Naive thymus-derived CD4-positive, alpha-beta T cell (primary cell): ENCODE measurements at regions of chr1 and their contacts with region 1.

Region 1: GRCh38 chr1:97820470-97821188 is 100.2 kb downstream of the DPYD start:
- DNase-seq: peak in 1 of 9 donors; percentile 7
- ATAC-seq: peak; percentile 32
- H3K4me3 ChIP-seq: no peak overlapping the region
- H3K4me3 Mint-ChIP-seq: no peak overlapping the region
- H3K27ac ChIP-seq: no peak overlapping the region
- H3K27ac Mint-ChIP-seq: no peak overlapping the region
- H3K4me1 ChIP-seq: no peaks in the 10 kb centered on the region
- H3K4me1 Mint-ChIP-seq: peaks cover 0 to 9% (median 1%) of the 10 kb centered on the region in 7 donors
- H3K27me3 ChIP-seq: no peaks in the 10 kb centered on the region
- H3K27me3 Mint-ChIP-seq: no peaks in the 10 kb centered on the region

Region 2: GRCh38 chr1:96966536-96967138 is 854.0 kb before region 1 on chr1:
- CTCF ChIA-PET with region 1: no interaction called
- POLR2A ChIA-PET with region 1: no interaction called
- intact Hi-C with region 1: loop called (anchors 1 to 10 kb)
- DNase-seq: peak; percentile 30 to 71 (median 60)
- ATAC-seq: peak; percentile 82
- H3K4me3 ChIP-seq: no peak overlapping the region
- H3K4me3 Mint-ChIP-seq: no peak overlapping the region
- H3K27ac ChIP-seq: no peak overlapping the region
- H3K27ac Mint-ChIP-seq: no peak overlapping the region
- H3K4me1 ChIP-seq: no peaks in the 10 kb centered on the region
- H3K4me1 Mint-ChIP-seq: no peaks in the 10 kb centered on the region
- H3K27me3 ChIP-seq: no peaks in the 10 kb centered on the region
- H3K27me3 Mint-ChIP-seq: peaks cover 7 to 55% (median 28%) of the 10 kb centered on the region in 5 donors

Region 3: GRCh38 chr1:97084546-97084945 is 736.1 kb before region 1 on chr1:
- CTCF ChIA-PET with region 1: no interaction called
- POLR2A ChIA-PET with region 1: no interaction called
- intact Hi-C with region 1: no loop called
- DNase-seq: no peak
- ATAC-seq: no peak
- H3K4me3 ChIP-seq: no peak overlapping the region
- H3K4me3 Mint-ChIP-seq: no peak overlapping the region
- H3K27ac ChIP-seq: no peak overlapping the region
- H3K27ac Mint-ChIP-seq: no peak overlapping the region
- H3K4me1 ChIP-seq: no peaks in the 10 kb centered on the region
- H3K4me1 Mint-ChIP-seq: no peaks in the 10 kb centered on the region
- H3K27me3 ChIP-seq: no peaks in the 10 kb centered on the region
- H3K27me3 Mint-ChIP-seq: no peaks in the 10 kb centered on the region

Region 4: GRCh38 chr1:97186404-97186803 is 634.2 kb before region 1 on chr1:
- CTCF ChIA-PET with region 1: no interaction called
- POLR2A ChIA-PET with region 1: no interaction called
- intact Hi-C with region 1: loop called in 1 of 2 experiments (anchors 5 kb)
- DNase-seq: peak in 2 of 9 donors; percentile 1 to 2
- ATAC-seq: no peak
- H3K4me3 ChIP-seq: no peak overlapping the region
- H3K4me3 Mint-ChIP-seq: no peak overlapping the region
- H3K27ac ChIP-seq: no peak overlapping the region
- H3K27ac Mint-ChIP-seq: no peak overlapping the region
- H3K4me1 ChIP-seq: no peaks in the 10 kb centered on the region
- H3K4me1 Mint-ChIP-seq: peaks cover 0 to 1% (median 0%) of the 10 kb centered on the region in 7 donors
- H3K27me3 ChIP-seq: no peaks in the 10 kb centered on the region
- H3K27me3 Mint-ChIP-seq: no peaks in the 10 kb centered on the region